Activated CD8-positive, alpha-beta memory T cell treated with anti-CD3 and anti-CD28 coated beads, Interleukin-2, amount 10 ng/mL, durations not matched to agents 7 days and 5 days (primary cell): ENCODE measurements at regions of chr3 and their contacts with region 1.

Region 1: DNA sequence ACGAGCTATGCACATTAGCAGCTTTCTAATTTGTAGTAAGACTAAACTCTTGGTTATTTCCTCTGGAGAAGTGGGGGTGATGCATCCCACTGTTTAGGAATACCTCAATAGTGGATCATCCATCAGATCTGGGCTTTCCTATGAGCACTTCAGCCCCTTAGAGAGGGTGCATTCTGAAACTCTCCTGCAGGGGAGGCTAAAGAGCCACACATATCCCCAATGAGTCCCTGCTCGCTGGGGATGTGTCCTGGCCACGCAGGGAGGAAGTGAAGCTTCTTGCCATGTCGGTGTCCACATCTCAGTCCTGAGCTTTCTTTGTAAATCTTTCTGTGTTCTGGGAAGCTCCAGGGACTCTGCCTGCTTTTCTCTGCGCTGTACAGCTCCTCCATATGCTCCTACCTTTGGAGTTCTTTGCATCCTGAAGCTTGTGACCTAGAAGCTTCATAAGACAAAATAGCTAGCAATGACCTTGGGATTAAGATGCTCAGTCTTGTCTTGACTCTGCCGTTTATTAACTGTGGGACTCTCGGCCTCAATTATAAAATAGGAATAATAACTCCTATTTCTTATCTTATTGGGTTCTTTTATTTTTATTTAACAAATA is 28.3 kb upstream of the MASP1 start:
- DNase-seq: peak; percentile 79
- ATAC-seq: peak; percentile 83
- H3K4me3 Mint-ChIP-seq: no peak overlapping the region
- H3K27ac Mint-ChIP-seq: no peak overlapping the region
- H3K4me1 Mint-ChIP-seq: peaks cover 19% of the 10 kb centered on the region
- H3K27me3 Mint-ChIP-seq: peaks cover 32% of the 10 kb centered on the region

Region 2: DNA sequence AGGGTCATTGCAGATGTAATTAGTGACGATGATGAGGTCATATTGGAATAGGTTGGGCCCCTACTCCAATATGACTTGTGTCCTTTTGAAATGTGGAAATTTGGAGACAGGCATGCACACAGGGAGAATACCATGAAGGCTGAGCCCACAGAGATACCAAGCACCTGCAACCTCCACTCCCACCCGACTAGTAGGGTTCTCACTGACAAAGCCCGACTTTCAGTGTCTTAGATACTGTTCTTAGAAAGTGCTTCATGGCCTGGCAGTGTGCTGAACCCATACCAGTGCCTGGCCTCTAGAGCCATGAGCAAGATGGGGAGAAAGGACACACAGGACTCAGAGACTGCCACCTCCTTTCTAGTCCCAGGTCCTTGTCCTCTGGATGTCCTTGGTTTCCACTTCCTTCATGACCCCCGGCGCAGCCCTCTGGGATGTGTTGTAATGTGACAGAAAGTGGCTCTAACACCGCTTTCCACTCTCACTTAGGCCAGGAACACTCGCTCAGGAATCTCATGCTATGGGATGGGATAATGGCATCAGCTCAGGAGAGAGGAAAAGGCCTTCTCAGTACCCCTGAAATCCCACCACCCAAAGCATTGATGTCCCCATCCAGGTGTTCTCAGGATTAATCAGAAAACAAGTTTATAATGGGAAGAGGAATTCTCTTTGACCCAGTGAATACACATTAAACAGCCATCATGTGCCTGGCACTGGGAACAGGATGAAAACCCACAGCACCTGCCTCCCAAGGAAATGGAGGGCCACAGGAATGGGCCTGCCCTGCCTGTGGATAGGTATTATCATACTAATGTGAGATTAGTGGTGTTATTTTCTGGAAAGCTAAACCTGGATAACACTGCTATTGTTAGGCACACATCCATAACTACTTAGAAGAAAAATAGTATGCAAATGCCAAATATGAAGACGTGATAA is 240.4 kb before region 1 on chr3:
- CTCF ChIA-PET with region 1: no interaction called
- DNase-seq: no peak
- ATAC-seq: no peak
- H3K4me3 Mint-ChIP-seq: no peak overlapping the region
- H3K27ac Mint-ChIP-seq: no peak overlapping the region
- H3K4me1 Mint-ChIP-seq: peaks cover under 1% of the 10 kb centered on the region
- H3K27me3 Mint-ChIP-seq: no peaks in the 10 kb centered on the region

Region 3: GRCh38 chr3:187281191-187281714 is 38.5 kb before region 1 on chr3:
- CTCF ChIA-PET with region 1: no interaction called
- DNase-seq: no peak
- ATAC-seq: no peak
- H3K4me3 Mint-ChIP-seq: no peak overlapping the region
- H3K27ac Mint-ChIP-seq: no peak overlapping the region
- H3K4me1 Mint-ChIP-seq: no peaks in the 10 kb centered on the region
- H3K27me3 Mint-ChIP-seq: peaks cover 40% of the 10 kb centered on the region

Region 4: GRCh38 chr3:187305881-187306280 is 13.9 kb before region 1 on chr3:
- CTCF ChIA-PET with region 1: interaction called, 35 read pairs
- DNase-seq: no peak
- ATAC-seq: no peak
- H3K4me3 Mint-ChIP-seq: no peak overlapping the region
- H3K27ac Mint-ChIP-seq: no peak overlapping the region
- H3K4me1 Mint-ChIP-seq: no peaks in the 10 kb centered on the region
- H3K27me3 Mint-ChIP-seq: peaks cover 44% of the 10 kb centered on the region

Region 5: DNA sequence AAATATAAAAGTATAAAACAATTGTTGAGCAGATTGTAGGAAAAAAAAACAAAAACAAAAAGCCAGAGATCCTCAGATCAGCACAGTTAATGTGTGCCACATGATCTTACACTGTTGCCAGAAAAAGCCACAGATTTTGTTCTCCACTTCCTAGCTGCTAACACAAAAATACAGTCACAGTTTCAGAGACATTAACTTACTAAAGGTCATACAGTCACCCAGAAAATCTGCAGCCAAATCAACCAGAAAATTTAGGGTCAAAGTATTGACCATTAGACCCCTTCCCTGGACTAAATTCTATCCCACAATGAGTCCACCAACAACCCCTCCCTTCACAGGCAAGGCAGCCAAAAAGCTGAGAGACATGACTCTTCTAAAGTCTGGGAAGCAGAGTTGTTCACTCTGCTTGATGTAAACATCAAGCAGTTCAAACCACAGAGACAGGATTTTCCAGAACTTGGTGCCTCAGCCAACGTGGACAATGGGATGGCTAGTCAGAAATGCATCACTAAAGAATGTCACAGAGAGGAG is 291.2 kb after region 1 on chr3:
- CTCF ChIA-PET with region 1: interaction called, 49 read pairs
- DNase-seq: no peak
- ATAC-seq: no peak
- H3K4me3 Mint-ChIP-seq: no peak overlapping the region
- H3K27ac Mint-ChIP-seq: no peak overlapping the region
- H3K4me1 Mint-ChIP-seq: peaks cover 2% of the 10 kb centered on the region
- H3K27me3 Mint-ChIP-seq: peaks cover 47% of the 10 kb centered on the region

Region 6: GRCh38 chr3:187679638-187680396 is 360.0 kb after region 1 on chr3:
- CTCF ChIA-PET with region 1: interaction called, 370 read pairs
- DNase-seq: peak; percentile 74
- ATAC-seq: peak; percentile 76
- H3K4me3 Mint-ChIP-seq: no peak overlapping the region
- H3K27ac Mint-ChIP-seq: no peak overlapping the region
- H3K4me1 Mint-ChIP-seq: peaks cover 5% of the 10 kb centered on the region
- H3K27me3 Mint-ChIP-seq: peaks cover 58% of the 10 kb centered on the region

Region 7: DNA sequence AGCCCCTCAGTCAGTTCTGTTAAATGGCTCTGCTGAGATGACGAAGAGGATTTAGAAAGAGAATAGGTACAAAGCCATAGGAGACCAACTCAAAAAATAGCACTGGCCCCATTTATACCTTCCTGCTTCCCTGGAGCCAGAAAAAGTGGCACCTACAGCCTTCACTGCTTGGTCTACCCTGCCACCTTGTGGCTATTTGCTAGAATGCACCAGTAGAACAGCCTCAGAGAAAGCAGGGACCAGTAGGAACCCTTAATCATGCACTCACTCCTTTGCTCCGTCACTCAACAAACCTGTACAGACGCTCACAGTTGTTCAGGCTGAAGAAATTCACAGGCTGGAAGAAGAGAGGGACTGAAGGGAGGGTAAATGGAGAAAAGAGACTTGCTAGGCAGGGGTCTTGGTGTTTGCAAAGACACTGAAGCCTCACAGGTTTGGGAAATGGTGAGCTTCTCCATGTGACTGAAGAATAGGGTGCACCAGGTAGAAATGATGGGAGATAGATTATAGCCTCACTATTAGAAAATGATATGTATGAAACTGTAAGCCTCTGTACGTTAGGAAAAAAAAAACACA is 394.7 kb after region 1 on chr3:
- CTCF ChIA-PET with region 1: interaction called, 69 read pairs
- DNase-seq: peak; percentile 82
- ATAC-seq: peak; percentile 85
- H3K4me3 Mint-ChIP-seq: no peak overlapping the region
- H3K27ac Mint-ChIP-seq: no peak overlapping the region
- H3K4me1 Mint-ChIP-seq: peaks cover 17% of the 10 kb centered on the region
- H3K27me3 Mint-ChIP-seq: peaks cover 6% of the 10 kb centered on the region